AG04450 (cell line): ENCODE measurements at regions of chr3 and their contacts with region 1.

Region 1: GRCh38 chr3:24254649-24255048 is 240.0 kb downstream of the THRB start:
- DNase-seq: peak; percentile 54
- H3K4me3 ChIP-seq: no peak overlapping the region
- H3K27ac ChIP-seq: no peak overlapping the region
- H3K27me3 ChIP-seq: peaks cover 10% of the 10 kb centered on the region
- CTCF ChIP-seq: no peak

Region 2: DNA sequence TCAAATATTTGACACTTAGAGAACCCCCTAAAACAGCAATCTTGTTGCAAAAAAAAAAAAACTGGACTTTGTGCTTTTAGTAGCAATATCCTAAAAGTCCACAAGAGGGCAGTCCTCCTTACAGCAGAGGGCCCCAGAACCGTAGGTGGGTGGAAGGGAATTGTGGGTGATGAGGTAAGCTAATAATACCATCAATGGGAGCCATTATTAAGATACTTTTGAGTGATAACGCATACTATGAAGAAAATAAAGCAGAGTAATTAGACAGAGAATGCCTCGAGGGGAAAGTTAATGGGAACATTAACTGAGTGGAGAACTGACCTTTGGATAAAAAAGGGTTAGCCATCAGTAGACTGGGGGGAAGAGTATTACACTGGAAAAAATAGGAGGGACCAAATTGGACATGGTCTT is 10.1 kb after region 1 on chr3:
- CTCF ChIA-PET with region 1: interaction called, 12 read pairs
- POLR2A ChIA-PET with region 1: no interaction called
- DNase-seq: no peak
- H3K4me3 ChIP-seq: no peak overlapping the region
- H3K27ac ChIP-seq: no peak overlapping the region
- H3K27me3 ChIP-seq: peaks cover 10% of the 10 kb centered on the region
- CTCF ChIP-seq: peak; percentile 83